Caco-2 (cell line): ENCODE measurements at regions of chr13 and their contacts with region 1.

Region 1: GRCh38 chr13:42110410-42111155 is 62.1 kb downstream of the DGKH start:
- DNase-seq: peak in 1 of 2 experiments; percentile 72
- H3K4me3 ChIP-seq: no peak overlapping the region
- H3K4me3 Mint-ChIP-seq: no peak overlapping the region
- H3K27ac Mint-ChIP-seq: no peak overlapping the region
- H3K4me1 ChIP-seq: peaks cover 15% of the 10 kb centered on the region
- H3K4me1 Mint-ChIP-seq: no peaks in the 10 kb centered on the region
- H3K27me3 ChIP-seq: no peaks in the 10 kb centered on the region
- H3K27me3 Mint-ChIP-seq: no peaks in the 10 kb centered on the region
- CTCF ChIP-seq: peak; percentile 66 to 70

Region 2: GRCh38 chr13:41352935-41353840 is 757.4 kb before region 1 on chr13:
- CTCF ChIA-PET with region 1: no interaction called
- POLR2A ChIA-PET with region 1: no interaction called
- intact Hi-C with region 1: loop called (anchors 10 kb)
- DNase-seq: peak in 1 of 2 experiments; percentile 53
- H3K4me3 ChIP-seq: no peak overlapping the region
- H3K4me3 Mint-ChIP-seq: no peak overlapping the region
- H3K27ac Mint-ChIP-seq: peak overlapping the region; percentile 51
- H3K4me1 ChIP-seq: peaks cover 10% of the 10 kb centered on the region
- H3K4me1 Mint-ChIP-seq: peaks cover 13% of the 10 kb centered on the region
- H3K27me3 ChIP-seq: no peaks in the 10 kb centered on the region
- H3K27me3 Mint-ChIP-seq: no peaks in the 10 kb centered on the region
- CTCF ChIP-seq: peak; percentile 69 to 83

Region 3: GRCh38 chr13:41411522-41411921 is 699.1 kb before region 1 on chr13:
- CTCF ChIA-PET with region 1: no interaction called
- POLR2A ChIA-PET with region 1: no interaction called
- intact Hi-C with region 1: loop called (anchors 1 kb)
- DNase-seq: peak; percentile 72 to 74
- H3K4me3 ChIP-seq: no peak overlapping the region
- H3K4me3 Mint-ChIP-seq: no peak overlapping the region
- H3K27ac Mint-ChIP-seq: no peak overlapping the region
- H3K4me1 ChIP-seq: 0 out of 2 replicates have a peak, but pooled peaks cover 4% of the 10 kb centered on the region
- H3K4me1 Mint-ChIP-seq: no peaks in the 10 kb centered on the region
- H3K27me3 ChIP-seq: no peaks in the 10 kb centered on the region
- H3K27me3 Mint-ChIP-seq: no peaks in the 10 kb centered on the region
- CTCF ChIP-seq: peak; percentile 48 to 52

Region 4: GRCh38 chr13:41905600-41906254 is 204.9 kb before region 1 on chr13:
- CTCF ChIA-PET with region 1: no interaction called
- POLR2A ChIA-PET with region 1: no interaction called
- intact Hi-C with region 1: loop called (anchors 1 kb)
- DNase-seq: peak in 1 of 2 experiments; percentile 31
- H3K4me3 ChIP-seq: no peak overlapping the region
- H3K4me3 Mint-ChIP-seq: no peak overlapping the region
- H3K27ac Mint-ChIP-seq: no peak overlapping the region
- H3K4me1 ChIP-seq: no peaks in the 10 kb centered on the region
- H3K4me1 Mint-ChIP-seq: no peaks in the 10 kb centered on the region
- H3K27me3 ChIP-seq: no peaks in the 10 kb centered on the region
- H3K27me3 Mint-ChIP-seq: no peaks in the 10 kb centered on the region
- CTCF ChIP-seq: peak; percentile 65 to 79

Region 5: GRCh38 chr13:42048682-42049453 is 61.7 kb before region 1 on chr13:
- CTCF ChIA-PET with region 1: no interaction called
- POLR2A ChIA-PET with region 1: no interaction called
- intact Hi-C with region 1: loop called (anchors 5 kb)
- DNase-seq: peak; percentile 86 to 87
- H3K4me3 ChIP-seq: peak overlapping the region; percentile 87
- H3K4me3 Mint-ChIP-seq: peak overlapping the region; percentile 96
- H3K27ac Mint-ChIP-seq: no peak overlapping the region
- H3K4me1 ChIP-seq: peaks cover 13% of the 10 kb centered on the region
- H3K4me1 Mint-ChIP-seq: peaks cover 6% of the 10 kb centered on the region
- H3K27me3 ChIP-seq: no peaks in the 10 kb centered on the region
- H3K27me3 Mint-ChIP-seq: peaks cover 16% of the 10 kb centered on the region
- CTCF ChIP-seq: no peak

Region 6: GRCh38 chr13:42125046-42125445 is 14.5 kb after region 1 on chr13:
- CTCF ChIA-PET with region 1: no interaction called
- POLR2A ChIA-PET with region 1: no interaction called
- intact Hi-C with region 1: no loop called
- DNase-seq: no peak
- H3K4me3 ChIP-seq: no peak overlapping the region
- H3K4me3 Mint-ChIP-seq: no peak overlapping the region
- H3K27ac Mint-ChIP-seq: no peak overlapping the region
- H3K4me1 ChIP-seq: no peaks in the 10 kb centered on the region
- H3K4me1 Mint-ChIP-seq: no peaks in the 10 kb centered on the region
- H3K27me3 ChIP-seq: no peaks in the 10 kb centered on the region
- H3K27me3 Mint-ChIP-seq: no peaks in the 10 kb centered on the region
- CTCF ChIP-seq: no peak

Region 7: DNA sequence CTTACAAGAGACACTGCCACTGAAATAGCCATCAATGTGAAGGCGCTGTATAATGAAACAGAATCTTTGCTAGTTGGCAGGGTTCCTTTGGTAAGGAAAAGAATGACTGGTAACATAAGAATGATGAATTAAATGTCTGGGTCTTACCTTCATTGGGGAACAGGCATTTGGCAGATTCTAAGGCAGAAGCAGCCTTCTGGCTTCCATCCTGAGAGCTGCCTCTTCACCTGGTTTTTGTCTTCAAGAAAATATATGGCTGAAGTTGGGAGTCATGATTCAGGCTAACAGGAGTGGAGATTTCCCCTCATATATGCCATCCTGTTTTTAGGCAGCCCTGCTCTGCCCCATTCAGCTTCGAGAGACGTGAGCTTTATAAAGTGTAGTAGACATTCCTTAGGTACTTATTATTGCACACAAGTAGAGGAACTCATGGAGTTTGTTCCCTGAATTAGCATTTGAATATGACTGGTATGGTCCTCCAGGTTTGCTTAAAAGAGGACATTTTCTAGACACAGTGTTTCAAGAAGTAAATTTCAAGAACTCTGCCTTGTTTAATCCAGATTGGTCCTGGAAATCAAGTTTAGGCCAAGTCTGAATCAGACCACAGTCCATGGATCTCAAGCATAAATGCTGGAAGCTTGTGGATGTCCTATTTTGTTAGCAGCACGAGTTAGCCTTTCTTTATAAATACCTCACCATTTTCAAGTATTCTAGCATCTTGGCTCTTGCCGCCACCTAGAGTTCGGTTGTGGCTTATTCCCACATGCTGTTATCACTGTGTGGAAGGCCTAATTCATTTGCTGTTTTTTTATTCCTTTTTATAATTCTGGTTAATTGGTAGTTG is 105.2 kb after region 1 on chr13:
- CTCF ChIA-PET with region 1: no interaction called
- POLR2A ChIA-PET with region 1: no interaction called
- intact Hi-C with region 1: loop called (anchors 2 kb)
- DNase-seq: peak; percentile 45 to 55
- H3K4me3 ChIP-seq: no peak overlapping the region
- H3K4me3 Mint-ChIP-seq: no peak overlapping the region
- H3K27ac Mint-ChIP-seq: no peak overlapping the region
- H3K4me1 ChIP-seq: no peaks in the 10 kb centered on the region
- H3K4me1 Mint-ChIP-seq: peaks cover 6% of the 10 kb centered on the region
- H3K27me3 ChIP-seq: no peaks in the 10 kb centered on the region
- H3K27me3 Mint-ChIP-seq: no peaks in the 10 kb centered on the region
- CTCF ChIP-seq: peak; percentile 41 to 65